Activated T-helper 2 cell treated with anti-CD3 and anti-CD28 coated beads, Interferon-gamma antibody, Interleukin-2, Interleukin-4, amounts not matched to agents 10 μg/mL and 5 μg/mL and 100 μg/mL, durations not matched to agents 14 hours and 24 hours and 36 hours (primary cell): ENCODE measurements at regions of chr12 and their contacts with region 1.

Region 1: DNA sequence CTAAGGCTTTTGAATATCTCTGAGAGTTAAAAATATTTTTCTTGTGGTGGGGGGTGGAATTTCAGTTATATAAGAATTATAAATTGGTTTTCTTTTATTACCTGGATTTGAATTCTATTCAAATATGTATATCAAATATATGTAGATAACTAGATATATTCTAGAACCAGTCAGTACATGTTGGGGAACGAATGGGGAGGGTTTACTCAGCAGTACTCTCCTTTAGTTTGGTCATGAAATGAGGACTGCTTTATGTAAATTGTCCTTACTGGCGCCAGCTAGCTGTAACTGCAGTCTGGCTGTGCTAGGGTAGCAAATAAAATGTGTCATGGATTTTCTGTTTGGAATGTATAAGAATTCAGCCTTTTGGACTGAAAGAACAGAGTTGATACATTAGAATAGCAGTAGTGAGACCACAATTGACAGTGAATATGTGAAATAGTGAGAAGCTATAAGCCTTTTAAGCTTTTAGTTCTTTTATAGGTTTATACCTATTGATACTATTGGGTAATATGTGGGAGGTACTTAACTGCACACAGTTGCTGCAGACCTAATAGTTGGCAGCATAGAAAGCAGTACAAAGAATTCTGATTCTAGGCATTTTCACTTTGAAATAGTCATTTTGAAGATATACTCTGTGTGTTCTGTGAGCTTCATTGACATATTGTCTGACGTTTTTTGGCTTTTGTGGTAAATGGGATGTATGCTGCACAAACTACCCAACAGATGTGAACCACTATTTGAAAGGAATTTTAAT is 29.0 kb downstream of the ATF7IP start:
- DNase-seq: peak; percentile 42
- H3K4me3 Mint-ChIP-seq: peak overlapping the region; percentile 89
- H3K27ac Mint-ChIP-seq: peak overlapping the region; percentile 92
- H3K4me1 Mint-ChIP-seq: peaks cover 67% of the 10 kb centered on the region
- H3K27me3 Mint-ChIP-seq: no peaks in the 10 kb centered on the region

Region 2: GRCh38 chr12:14417715-14418114 is 23.2 kb after region 1 on chr12:
- intact Hi-C with region 1: loop called (anchors 1 kb)
- DNase-seq: peak; percentile 64
- H3K4me3 Mint-ChIP-seq: peak overlapping the region; percentile 77
- H3K27ac Mint-ChIP-seq: peak overlapping the region; percentile 92
- H3K4me1 Mint-ChIP-seq: peaks cover 42% of the 10 kb centered on the region
- H3K27me3 Mint-ChIP-seq: no peaks in the 10 kb centered on the region

Region 3: DNA sequence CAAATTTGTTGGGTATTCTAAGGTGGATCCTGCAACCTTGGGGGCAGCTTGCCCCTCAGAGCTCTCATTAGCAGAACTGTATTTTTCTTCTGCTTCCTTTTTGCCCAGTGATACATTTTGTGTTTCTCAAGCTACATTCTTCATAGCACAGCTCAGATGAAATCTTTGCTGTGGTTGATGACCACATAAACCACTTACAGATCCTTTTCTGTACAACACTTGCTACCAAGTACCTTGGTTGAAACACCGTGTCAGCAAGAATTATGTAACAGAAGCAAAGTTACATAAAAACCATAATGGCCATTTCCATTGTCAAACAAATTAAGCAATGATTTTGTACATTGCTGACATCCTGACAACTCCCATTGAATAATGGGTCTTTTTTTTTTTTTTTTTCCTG is 182.8 kb after region 1 on chr12:
- intact Hi-C with region 1: no loop called
- DNase-seq: no peak
- H3K4me3 Mint-ChIP-seq: no peak overlapping the region
- H3K27ac Mint-ChIP-seq: no peak overlapping the region
- H3K4me1 Mint-ChIP-seq: peaks cover 6% of the 10 kb centered on the region
- H3K27me3 Mint-ChIP-seq: peaks cover 31% of the 10 kb centered on the region

Region 4: GRCh38 chr12:15563663-15564062 is 1169.2 kb after region 1 on chr12:
- intact Hi-C with region 1: loop called (anchors 10 kb)
- DNase-seq: no peak
- H3K4me3 Mint-ChIP-seq: peak overlapping the region; percentile 83
- H3K27ac Mint-ChIP-seq: peak overlapping the region; percentile 91
- H3K4me1 Mint-ChIP-seq: peaks cover 65% of the 10 kb centered on the region
- H3K27me3 Mint-ChIP-seq: no peaks in the 10 kb centered on the region